GM12878 (cell line): ENCODE measurements at regions of chr5 and their contacts with region 1.

Region 1: GRCh38 chr5:116640236-116640635 is 65.6 kb upstream of the SEMA6A start:
- DNase-seq: no peak
- ATAC-seq: no peak
- H3K4me3 ChIP-seq: no peak overlapping the region
- H3K27ac ChIP-seq: no peak overlapping the region
- H3K4me1 ChIP-seq: no peaks in the 10 kb centered on the region
- H3K27me3 ChIP-seq: no peaks in the 10 kb centered on the region
- CTCF ChIP-seq: no peak
- EP300 ChIP-seq: no peak
- POLR2A ChIP-seq: no peak
- RAD21 ChIP-seq: no peak

Region 2: DNA sequence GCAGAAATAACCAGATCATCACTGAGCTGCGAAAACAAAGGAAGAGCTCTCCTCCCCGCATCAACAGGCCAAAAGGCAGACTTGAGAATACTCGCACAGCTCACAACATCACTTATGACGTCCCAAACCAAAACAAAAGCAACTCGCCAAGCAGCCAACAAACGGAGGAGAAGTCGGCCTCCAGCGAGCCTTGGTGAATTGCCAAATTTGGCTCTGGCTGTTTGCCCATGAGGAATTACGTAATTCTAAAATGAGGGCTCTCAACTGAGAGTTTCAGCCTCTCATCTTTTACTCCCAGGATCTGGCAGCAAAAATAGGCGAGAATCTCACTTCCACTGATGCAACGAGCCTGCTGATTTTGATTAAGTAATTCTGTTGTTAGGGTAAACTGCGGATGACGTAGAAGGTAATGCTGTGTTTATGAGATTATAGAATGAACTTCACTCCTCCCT is 13.9 kb before region 1 on chr5:
- CTCF ChIA-PET with region 1: interaction called, 8 read pairs
- POLR2A ChIA-PET with region 1: interaction called, 5 read pairs
- RAD21 ChIA-PET with region 1: interaction called, 3 read pairs
- SMC1A ChIA-PET with region 1: interaction called, 32 read pairs
- in situ Hi-C with region 1: no loop called
- intact Hi-C with region 1: no loop called
- DNase-seq: no peak
- ATAC-seq: no peak
- H3K4me3 ChIP-seq: no peak overlapping the region
- H3K27ac ChIP-seq: no peak overlapping the region
- H3K4me1 ChIP-seq: peaks cover 6% of the 10 kb centered on the region
- H3K27me3 ChIP-seq: no peaks in the 10 kb centered on the region
- CTCF ChIP-seq: no peak
- EP300 ChIP-seq: no peak
- POLR2A ChIP-seq: no peak
- RAD21 ChIP-seq: no peak

Region 3: GRCh38 chr5:117357886-117358285 is 717.6 kb after region 1 on chr5:
- CTCF ChIA-PET with region 1: no interaction called
- POLR2A ChIA-PET with region 1: no interaction called
- RAD21 ChIA-PET with region 1: no interaction called
- SMC1A ChIA-PET with region 1: no interaction called
- in situ Hi-C with region 1: no loop called
- intact Hi-C with region 1: no loop called
- DNase-seq: no peak
- ATAC-seq: no peak
- H3K4me3 ChIP-seq: no peak overlapping the region
- H3K27ac ChIP-seq: no peak overlapping the region
- H3K4me1 ChIP-seq: no peaks in the 10 kb centered on the region
- H3K27me3 ChIP-seq: no peaks in the 10 kb centered on the region
- CTCF ChIP-seq: no peak
- EP300 ChIP-seq: no peak
- POLR2A ChIP-seq: no peak
- RAD21 ChIP-seq: no peak